ENCODE measurements at regions of chr15 and their contacts with region 1.

Region 1: DNA sequence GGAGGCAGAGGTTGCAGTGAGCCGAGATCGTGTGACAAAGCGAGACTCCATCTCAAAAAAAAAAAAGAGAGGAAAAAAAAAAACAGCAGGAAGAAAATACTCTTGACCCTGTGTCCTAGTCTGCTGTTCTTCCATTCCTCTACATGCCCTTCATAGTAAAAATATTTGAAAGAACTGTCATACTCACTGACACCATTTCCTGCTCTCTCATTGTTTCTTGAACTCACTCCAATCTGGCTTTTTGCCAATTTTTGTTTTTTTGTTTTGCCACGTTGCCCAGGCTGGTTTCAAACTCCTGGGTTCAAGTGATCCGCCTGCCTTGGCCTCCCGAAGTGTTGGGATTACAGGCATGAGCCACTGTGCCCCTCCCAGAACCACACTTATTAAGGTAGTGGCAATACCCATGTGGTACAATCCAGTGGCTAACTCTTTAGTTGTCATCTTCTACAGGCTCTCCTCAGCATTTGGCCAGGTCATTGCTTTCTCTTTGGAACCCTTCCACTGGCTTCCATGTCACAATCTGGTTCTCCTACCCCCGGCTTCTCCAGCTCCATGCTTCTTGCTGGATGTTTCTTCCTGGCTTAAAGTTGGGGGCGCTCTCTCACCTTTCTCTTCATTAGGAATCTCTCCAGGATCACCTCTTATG is 238.2 kb upstream of the C2CD4B start:
- DNase-seq: no peak
- ATAC-seq: no peak
- H3K4me3 Mint-ChIP-seq: no peak overlapping the region
- H3K27ac Mint-ChIP-seq: no peak overlapping the region
- H3K4me1 Mint-ChIP-seq: no peaks in the 10 kb centered on the region
- H3K27me3 Mint-ChIP-seq: peaks cover 26% of the 10 kb centered on the region

Region 2: GRCh38 chr15:62469874-62470688 is 66.8 kb after region 1 on chr15:
- CTCF ChIA-PET with region 1: no interaction called
- POLR2A ChIA-PET with region 1: no interaction called
- intact Hi-C with region 1: loop called in 1 of 2 experiments (anchors 10 kb)
- DNase-seq: no peak
- ATAC-seq: no peak
- H3K4me3 Mint-ChIP-seq: no peak overlapping the region
- H3K27ac Mint-ChIP-seq: no peak overlapping the region
- H3K4me1 Mint-ChIP-seq: no peaks in the 10 kb centered on the region
- H3K27me3 Mint-ChIP-seq: no peaks in the 10 kb centered on the region

Region 3: GRCh38 chr15:62584301-62585235 is 181.3 kb after region 1 on chr15:
- CTCF ChIA-PET with region 1: no interaction called
- POLR2A ChIA-PET with region 1: no interaction called
- intact Hi-C with region 1: no loop called
- DNase-seq: no peak
- ATAC-seq: no peak
- H3K4me3 Mint-ChIP-seq: no peak overlapping the region
- H3K27ac Mint-ChIP-seq: no peak overlapping the region
- H3K4me1 Mint-ChIP-seq: no peaks in the 10 kb centered on the region
- H3K27me3 Mint-ChIP-seq: peaks cover 7% of the 10 kb centered on the region